Breast epithelium (tissue), 4 donors: ENCODE measurements at regions of chr1 and their contacts with region 1.

Region 1: DNA sequence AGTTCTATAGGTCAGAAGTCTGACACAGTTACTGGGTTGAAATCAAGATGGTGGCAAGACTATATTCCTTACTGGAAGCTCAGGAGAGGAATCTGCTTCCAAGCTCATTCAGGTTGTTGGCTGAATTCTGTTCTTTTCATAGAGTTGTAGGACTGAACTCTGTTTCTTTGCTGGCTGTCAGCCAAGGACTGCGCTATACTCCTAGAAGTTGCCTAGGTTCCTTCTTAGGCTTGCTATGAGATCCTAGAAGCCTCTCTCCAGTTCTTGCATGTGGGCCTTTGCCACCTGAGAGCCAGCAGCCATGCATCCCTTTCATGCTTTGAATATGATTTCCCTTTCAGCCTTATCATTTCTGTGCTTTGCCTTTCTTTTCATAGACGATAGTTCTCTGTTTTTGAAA is 176.4 kb downstream of the RPS6KC1 start:
- DNase-seq: no peak
- H3K4me3 ChIP-seq: no peak overlapping the region
- H3K27ac ChIP-seq: no peak overlapping the region
- H3K4me1 ChIP-seq: no peaks in the 10 kb centered on the region
- H3K27me3 ChIP-seq: no peaks in the 10 kb centered on the region
- CTCF ChIP-seq: no peak
- POLR2A ChIP-seq: no peak

Region 2: GRCh38 chr1:213110349-213111300 is 116.8 kb before region 1 on chr1:
- intact Hi-C with region 1: loop called (anchors 5 kb)
- DNase-seq: no peak
- H3K4me3 ChIP-seq: no peak overlapping the region
- H3K27ac ChIP-seq: no peak overlapping the region
- H3K4me1 ChIP-seq: no peaks in the 10 kb centered on the region
- H3K27me3 ChIP-seq: no peaks in the 10 kb centered on the region
- CTCF ChIP-seq: no peak
- POLR2A ChIP-seq: no peak

Region 3: GRCh38 chr1:213211201-213211600 is 16.3 kb before region 1 on chr1:
- intact Hi-C with region 1: no loop called
- DNase-seq: no peak
- H3K4me3 ChIP-seq: no peak overlapping the region
- H3K27ac ChIP-seq: no peak overlapping the region
- H3K4me1 ChIP-seq: no peaks in the 10 kb centered on the region
- H3K27me3 ChIP-seq: no peaks in the 10 kb centered on the region
- CTCF ChIP-seq: no peak
- POLR2A ChIP-seq: no peak

Region 4: GRCh38 chr1:213256438-213257087 is 29.1 kb after region 1 on chr1:
- intact Hi-C with region 1: no loop called
- DNase-seq: no peak
- H3K4me3 ChIP-seq: no peak overlapping the region
- H3K27ac ChIP-seq: no peak overlapping the region
- H3K4me1 ChIP-seq: no peaks in the 10 kb centered on the region
- H3K27me3 ChIP-seq: no peaks in the 10 kb centered on the region
- CTCF ChIP-seq: no peak
- POLR2A ChIP-seq: no peak